Activated CD4-positive, alpha-beta memory T cell treated with anti-CD3 and anti-CD28 coated beads for 36 hours (primary cell): ENCODE measurements at regions of chr6 and their contacts with region 1.

Region 1: DNA sequence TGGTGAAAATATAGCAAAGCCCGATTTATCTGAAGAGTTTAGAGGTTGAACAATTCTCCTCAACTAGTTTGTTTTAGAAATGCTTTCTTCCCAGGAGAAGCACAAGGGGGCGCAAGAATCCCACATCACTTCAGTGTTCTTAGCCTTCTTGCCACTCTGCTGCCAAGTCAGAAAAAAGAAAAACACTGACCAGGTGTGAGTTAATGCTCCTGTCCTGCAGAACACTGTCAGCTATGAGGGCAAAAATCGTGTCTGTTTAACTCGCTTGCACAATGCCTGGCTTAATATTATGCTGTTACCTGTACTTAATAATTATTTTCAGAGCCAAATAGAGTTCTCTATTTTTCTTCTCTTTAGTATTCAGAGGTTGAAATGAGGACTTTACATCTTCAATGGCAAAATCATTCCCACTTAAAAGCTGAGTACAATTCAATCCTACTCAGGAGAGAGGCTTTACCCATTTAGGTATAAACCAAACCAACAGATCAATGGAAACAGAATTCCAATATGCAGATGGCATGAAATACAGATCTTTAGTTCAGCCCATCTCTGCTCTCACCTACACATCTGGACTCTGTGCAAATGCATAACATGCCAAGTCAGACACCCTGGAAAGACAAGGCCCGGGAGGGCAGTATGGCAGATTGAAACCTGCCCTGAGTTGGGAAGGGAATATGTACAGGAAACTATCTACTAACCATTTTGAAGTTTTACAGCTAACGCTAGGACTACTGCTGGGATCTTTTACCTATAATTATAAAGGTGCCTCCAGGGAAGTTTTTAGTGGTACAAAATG is 71.4 kb upstream of the TULP1 start:
- DNase-seq: peak; percentile 80
- H3K4me3 Mint-ChIP-seq: no peak overlapping the region
- H3K27ac Mint-ChIP-seq: peak overlapping the region; percentile 26
- H3K4me1 Mint-ChIP-seq: peaks cover 54% of the 10 kb centered on the region
- H3K27me3 Mint-ChIP-seq: no peaks in the 10 kb centered on the region

Region 2: GRCh38 chr6:35402136-35402855 is 181.8 kb before region 1 on chr6:
- CTCF ChIA-PET with region 1: no interaction called
- POLR2A ChIA-PET with region 1: no interaction called
- intact Hi-C with region 1: no loop called
- DNase-seq: peak; percentile 14
- H3K4me3 Mint-ChIP-seq: no peak overlapping the region
- H3K27ac Mint-ChIP-seq: no peak overlapping the region
- H3K4me1 Mint-ChIP-seq: peaks cover 7% of the 10 kb centered on the region
- H3K27me3 Mint-ChIP-seq: no peaks in the 10 kb centered on the region

Region 3: DNA sequence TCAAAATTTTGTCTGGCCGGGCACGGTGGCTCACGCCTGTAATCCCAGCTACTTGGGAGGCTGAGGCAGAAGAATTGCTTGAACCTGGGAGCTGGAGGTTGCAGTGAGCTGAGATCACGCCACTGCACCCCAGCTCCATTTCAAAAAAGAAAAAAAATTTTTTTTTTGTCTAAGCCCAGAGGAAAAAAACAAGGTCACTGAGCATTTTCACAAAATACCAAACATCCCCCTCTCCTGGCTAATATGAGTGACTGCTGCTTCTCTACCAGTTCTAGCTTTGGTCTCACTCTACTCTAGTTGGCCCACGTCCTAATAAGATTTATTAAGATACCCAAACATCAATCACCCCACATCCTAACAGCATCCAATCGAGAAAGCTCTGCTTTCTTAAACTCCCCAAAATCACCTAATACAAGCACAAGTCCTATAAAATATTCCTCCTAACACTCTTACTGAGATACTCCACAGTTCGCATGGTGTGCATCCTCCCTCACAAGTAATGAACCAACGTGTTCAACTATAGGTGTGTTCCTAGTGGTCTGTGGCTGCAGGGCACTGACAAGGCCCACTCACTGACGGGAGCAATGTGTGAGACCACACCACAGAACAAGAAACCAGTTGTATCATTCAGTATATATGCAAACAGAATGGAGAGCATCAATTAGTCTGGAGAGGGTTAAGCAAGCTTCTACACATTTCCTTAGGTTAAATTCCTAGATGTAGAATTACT is 40.4 kb after region 1 on chr6:
- CTCF ChIA-PET with region 1: interaction called, 54 read pairs
- POLR2A ChIA-PET with region 1: no interaction called
- intact Hi-C with region 1: loop called (anchors 1 kb)
- DNase-seq: no peak
- H3K4me3 Mint-ChIP-seq: no peak overlapping the region
- H3K27ac Mint-ChIP-seq: peak overlapping the region; percentile 43
- H3K4me1 Mint-ChIP-seq: peaks cover 25% of the 10 kb centered on the region
- H3K27me3 Mint-ChIP-seq: no peaks in the 10 kb centered on the region

Region 4: DNA sequence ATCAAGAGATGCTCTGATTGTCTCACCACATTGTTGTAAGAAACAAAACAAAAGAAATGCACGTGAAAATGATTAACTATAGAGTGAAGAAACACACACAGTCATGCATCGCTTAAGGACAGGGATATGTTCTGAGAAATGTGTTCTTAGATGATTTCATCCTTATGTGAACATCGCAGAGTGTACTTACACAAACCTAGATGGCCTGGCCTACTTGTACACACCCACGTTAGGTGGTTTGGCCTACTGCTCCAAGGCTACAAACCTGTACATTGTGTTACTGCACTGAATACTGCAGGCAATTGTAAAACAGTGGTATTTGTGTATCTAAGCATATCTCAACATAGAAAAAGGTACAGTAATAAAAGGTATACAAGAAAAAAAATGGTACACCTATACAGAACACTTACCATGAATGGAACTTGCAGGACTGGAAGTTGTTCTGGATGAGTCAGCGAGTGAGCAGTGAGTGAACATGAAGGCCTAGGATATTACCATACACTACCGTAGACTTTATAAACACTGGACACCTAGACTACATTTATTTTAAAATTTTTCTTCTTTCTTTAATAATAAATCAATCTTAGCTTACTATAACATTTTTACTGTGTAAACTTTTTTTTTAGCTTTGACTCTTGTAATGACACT is 56.0 kb after region 1 on chr6:
- CTCF ChIA-PET with region 1: interaction called, 10 read pairs
- POLR2A ChIA-PET with region 1: no interaction called
- intact Hi-C with region 1: no loop called
- DNase-seq: no peak
- H3K4me3 Mint-ChIP-seq: no peak overlapping the region
- H3K27ac Mint-ChIP-seq: peak overlapping the region; percentile 55
- H3K4me1 Mint-ChIP-seq: peaks cover 59% of the 10 kb centered on the region
- H3K27me3 Mint-ChIP-seq: no peaks in the 10 kb centered on the region

Region 5: GRCh38 chr6:35688581-35689322 is 104.7 kb after region 1 on chr6 and contains the start of gene FKBP5:
- CTCF ChIA-PET with region 1: interaction called, 11 read pairs
- POLR2A ChIA-PET with region 1: no interaction called
- intact Hi-C with region 1: no loop called
- DNase-seq: peak; percentile 93
- H3K4me3 Mint-ChIP-seq: peak within 1 kb of the TSS; percentile 92
- H3K27ac Mint-ChIP-seq: peak within 1 kb of the TSS; percentile 86
- H3K4me1 Mint-ChIP-seq: peaks cover 15% of the 10 kb centered on the region
- H3K27me3 Mint-ChIP-seq: no peaks in the 10 kb centered on the region
- total RNA-seq, gene FKBP5: 111 to 112 TPM

Region 6: DNA sequence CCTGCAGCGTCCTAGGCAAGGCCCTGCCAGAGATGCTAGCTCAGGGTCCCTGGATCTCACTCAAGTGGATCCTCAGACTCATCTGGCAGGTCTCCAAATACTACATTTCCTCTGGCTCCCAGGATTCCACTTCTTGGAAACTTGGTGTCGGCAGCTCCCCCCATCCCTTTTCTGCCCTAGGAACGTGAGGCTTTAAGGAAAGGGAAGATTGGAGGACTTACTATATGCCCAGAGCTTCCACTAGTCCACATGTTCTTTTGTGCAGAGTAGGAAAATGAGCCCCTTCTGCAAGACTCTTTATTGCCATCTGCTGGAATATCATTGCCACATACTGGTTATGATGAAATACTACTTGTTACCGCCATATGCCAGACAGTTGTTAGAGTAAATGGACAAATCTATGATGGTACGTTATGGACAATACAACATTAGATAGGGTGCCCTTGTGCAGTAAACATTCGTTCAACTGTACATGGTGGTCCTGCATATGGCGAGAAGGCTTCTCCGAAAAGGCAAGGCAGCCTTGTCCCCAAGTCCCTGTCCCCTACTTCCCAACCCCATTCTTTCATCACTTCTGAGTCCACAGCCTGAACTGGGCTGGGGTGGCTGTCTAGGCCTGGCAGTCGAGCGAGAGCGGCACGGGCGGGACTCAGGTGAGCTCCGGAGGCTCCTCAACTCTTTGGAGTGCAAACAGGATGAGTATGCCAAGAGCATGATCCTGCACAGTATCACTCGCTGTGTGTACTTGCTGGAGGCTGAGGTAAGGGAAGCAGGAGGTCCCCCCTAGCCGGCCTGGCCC is 153.5 kb after region 1 on chr6:
- CTCF ChIA-PET with region 1: interaction called, 210 read pairs
- POLR2A ChIA-PET with region 1: no interaction called
- intact Hi-C with region 1: loop called (anchors 1 kb)
- DNase-seq: no peak
- H3K4me3 Mint-ChIP-seq: no peak overlapping the region
- H3K27ac Mint-ChIP-seq: peak overlapping the region; percentile 33
- H3K4me1 Mint-ChIP-seq: peaks cover 37% of the 10 kb centered on the region
- H3K27me3 Mint-ChIP-seq: no peaks in the 10 kb centered on the region

Region 7: DNA sequence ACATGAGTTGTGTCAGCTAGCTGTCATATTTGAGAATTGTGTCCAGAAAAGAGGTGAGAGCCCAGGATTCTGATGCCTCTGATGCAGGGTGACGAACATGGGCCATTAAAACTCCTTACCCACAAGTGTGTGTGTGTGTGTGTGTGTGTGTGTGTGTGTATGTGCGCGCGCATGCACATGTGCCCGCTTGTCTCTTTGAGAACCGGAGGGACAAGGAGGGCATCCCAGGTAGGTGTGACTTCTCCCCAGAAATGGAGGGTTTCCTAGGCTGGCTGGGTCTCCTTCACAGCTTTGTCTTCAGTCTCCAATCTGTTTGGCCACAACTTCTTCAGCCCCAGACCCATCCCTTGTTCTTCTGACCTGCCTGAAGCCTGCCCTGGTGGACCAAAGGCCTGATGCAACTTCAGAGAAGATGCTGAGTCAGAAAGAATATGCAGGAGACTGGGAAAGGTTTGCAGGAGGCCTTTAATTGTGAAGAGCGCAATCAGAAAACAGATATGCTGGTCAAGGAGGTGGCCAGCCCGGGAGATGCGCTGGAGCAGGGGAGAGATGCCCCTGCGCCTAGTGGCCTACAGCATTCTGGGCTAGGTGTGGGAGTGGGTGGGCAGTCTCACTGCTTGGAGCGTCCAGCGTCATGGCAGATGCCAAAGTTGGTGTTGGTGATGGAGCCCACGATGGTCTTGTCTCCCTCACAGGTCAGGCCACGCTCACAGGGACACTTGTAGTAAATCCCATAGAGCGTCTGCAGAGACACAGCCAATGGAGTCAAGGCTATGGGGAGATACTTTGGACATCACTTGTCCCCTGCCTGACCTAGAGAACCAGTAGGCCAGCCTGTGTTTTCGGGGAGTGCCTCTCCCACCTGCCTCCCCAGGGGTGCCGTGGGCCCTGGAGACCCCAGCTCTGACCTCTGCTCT is 210.7 kb after region 1 on chr6:
- CTCF ChIA-PET with region 1: no interaction called
- POLR2A ChIA-PET with region 1: no interaction called
- intact Hi-C with region 1: no loop called
- DNase-seq: no peak
- H3K4me3 Mint-ChIP-seq: no peak overlapping the region
- H3K27ac Mint-ChIP-seq: no peak overlapping the region
- H3K4me1 Mint-ChIP-seq: no peaks in the 10 kb centered on the region
- H3K27me3 Mint-ChIP-seq: peaks cover 7% of the 10 kb centered on the region